Activated CD8-positive, alpha-beta T cell treated with anti-CD3 and anti-CD28 coated beads for 36 hours (primary cell): ENCODE measurements at regions of chr6 and their contacts with region 1.

Region 1: DNA sequence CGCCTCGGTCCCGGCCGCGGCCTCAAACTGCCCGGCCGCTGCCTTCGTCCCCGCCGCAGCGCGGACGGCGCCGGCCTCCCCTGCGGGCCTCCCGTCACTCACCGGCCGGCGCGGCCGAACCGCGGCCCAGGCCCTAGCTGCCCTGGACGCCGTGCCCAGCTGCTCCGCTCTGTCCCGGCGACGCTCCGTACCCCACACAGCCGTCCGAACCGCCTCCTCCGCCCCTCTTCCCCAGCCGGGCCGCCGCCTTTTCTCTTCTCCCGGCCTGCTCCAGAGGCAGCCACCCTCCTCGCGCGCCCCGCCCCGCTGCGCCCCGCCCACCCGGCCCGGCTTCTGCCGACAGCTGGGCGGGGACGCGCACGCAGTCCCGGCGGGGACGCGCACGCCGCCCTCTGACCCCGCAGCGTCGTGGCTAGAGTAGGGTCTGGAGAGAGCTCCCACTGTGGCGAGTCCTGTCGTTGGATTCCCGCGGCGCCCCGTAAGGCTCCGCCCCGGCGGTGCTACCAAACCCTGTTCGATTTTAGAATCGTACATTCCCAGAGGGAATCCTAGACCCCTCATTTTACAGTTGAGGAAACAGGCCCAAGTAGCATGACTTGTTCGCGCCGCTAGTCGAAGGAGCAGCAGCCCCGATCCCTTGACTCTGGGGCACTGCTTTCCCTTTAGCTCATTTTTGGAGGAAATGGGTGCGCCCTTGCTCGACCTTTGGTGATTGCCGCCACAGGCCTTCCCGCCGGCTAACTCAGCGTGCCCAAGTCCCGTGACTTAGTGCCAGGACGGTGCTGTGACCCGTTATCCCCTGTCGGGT is at the start of gene FBXO30:
- DNase-seq: peak; percentile 85
- ATAC-seq: peak; percentile 81
- H3K4me3 Mint-ChIP-seq: peak within 1 kb of the TSS; percentile 84
- H3K27ac Mint-ChIP-seq: peak within 1 kb of the TSS; percentile 94
- H3K4me1 Mint-ChIP-seq: peaks cover 47% of the 10 kb centered on the region
- H3K27me3 Mint-ChIP-seq: no peaks in the 10 kb centered on the region
- CTCF ChIP-seq: no peak
- total RNA-seq, gene FBXO30: 3.1 to 3.4 TPM

Region 2: GRCh38 chr6:145711372-145711771 is 103.3 kb before region 1 on chr6:
- CTCF ChIA-PET with region 1: no interaction called
- POLR2A ChIA-PET with region 1: no interaction called
- intact Hi-C with region 1: no loop called
- DNase-seq: no peak
- ATAC-seq: no peak
- H3K4me3 Mint-ChIP-seq: no peak overlapping the region
- H3K27ac Mint-ChIP-seq: no peak overlapping the region
- H3K4me1 Mint-ChIP-seq: peaks cover 10% of the 10 kb centered on the region
- H3K27me3 Mint-ChIP-seq: no peaks in the 10 kb centered on the region
- CTCF ChIP-seq: no peak

Region 3: GRCh38 chr6:145734486-145735355 is 80.0 kb before region 1 on chr6:
- CTCF ChIA-PET with region 1: interaction called, 5 read pairs
- POLR2A ChIA-PET with region 1: interaction called, 20 read pairs
- intact Hi-C with region 1: loop called (anchors 1 kb)
- DNase-seq: peak; percentile 87
- ATAC-seq: peak; percentile 69
- H3K4me3 Mint-ChIP-seq: peak overlapping the region; percentile 90
- H3K27ac Mint-ChIP-seq: peak overlapping the region; percentile 89
- H3K4me1 Mint-ChIP-seq: peaks cover 26% of the 10 kb centered on the region
- H3K27me3 Mint-ChIP-seq: no peaks in the 10 kb centered on the region
- CTCF ChIP-seq: no peak

Region 4: GRCh38 chr6:145850671-145851070 is 36.0 kb after region 1 on chr6:
- CTCF ChIA-PET with region 1: no interaction called
- POLR2A ChIA-PET with region 1: no interaction called
- intact Hi-C with region 1: no loop called
- DNase-seq: no peak
- ATAC-seq: no peak
- H3K4me3 Mint-ChIP-seq: no peak overlapping the region
- H3K27ac Mint-ChIP-seq: no peak overlapping the region
- H3K4me1 Mint-ChIP-seq: no peaks in the 10 kb centered on the region
- H3K27me3 Mint-ChIP-seq: no peaks in the 10 kb centered on the region
- CTCF ChIP-seq: no peak

Region 5: DNA sequence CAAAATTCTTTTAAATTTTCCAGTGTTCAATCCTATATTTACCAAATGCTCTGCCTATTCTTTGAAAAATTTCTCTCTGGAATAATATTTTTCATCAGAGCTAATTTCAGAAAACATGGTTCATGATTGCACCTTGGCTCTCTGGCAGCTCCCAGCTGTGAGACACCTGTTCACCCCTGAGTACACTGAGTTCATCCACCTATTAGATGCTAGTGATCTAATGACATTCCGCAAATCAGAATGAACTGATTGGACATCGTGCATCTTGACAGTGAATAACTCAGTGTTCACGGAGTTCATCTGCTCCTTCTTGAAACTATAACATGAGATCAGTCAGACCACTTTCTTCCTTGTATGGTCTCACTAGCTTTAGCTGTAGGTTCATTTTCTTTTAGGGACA is 153.3 kb after region 1 on chr6:
- CTCF ChIA-PET with region 1: no interaction called
- POLR2A ChIA-PET with region 1: no interaction called
- intact Hi-C with region 1: no loop called
- DNase-seq: no peak
- ATAC-seq: no peak
- H3K4me3 Mint-ChIP-seq: no peak overlapping the region
- H3K27ac Mint-ChIP-seq: no peak overlapping the region
- H3K4me1 Mint-ChIP-seq: peaks cover 20% of the 10 kb centered on the region
- H3K27me3 Mint-ChIP-seq: peaks cover 3% of the 10 kb centered on the region
- CTCF ChIP-seq: no peak